IMR-90 (cell line): ENCODE measurements at regions of chr11 and their contacts with region 1.

Region 1: DNA sequence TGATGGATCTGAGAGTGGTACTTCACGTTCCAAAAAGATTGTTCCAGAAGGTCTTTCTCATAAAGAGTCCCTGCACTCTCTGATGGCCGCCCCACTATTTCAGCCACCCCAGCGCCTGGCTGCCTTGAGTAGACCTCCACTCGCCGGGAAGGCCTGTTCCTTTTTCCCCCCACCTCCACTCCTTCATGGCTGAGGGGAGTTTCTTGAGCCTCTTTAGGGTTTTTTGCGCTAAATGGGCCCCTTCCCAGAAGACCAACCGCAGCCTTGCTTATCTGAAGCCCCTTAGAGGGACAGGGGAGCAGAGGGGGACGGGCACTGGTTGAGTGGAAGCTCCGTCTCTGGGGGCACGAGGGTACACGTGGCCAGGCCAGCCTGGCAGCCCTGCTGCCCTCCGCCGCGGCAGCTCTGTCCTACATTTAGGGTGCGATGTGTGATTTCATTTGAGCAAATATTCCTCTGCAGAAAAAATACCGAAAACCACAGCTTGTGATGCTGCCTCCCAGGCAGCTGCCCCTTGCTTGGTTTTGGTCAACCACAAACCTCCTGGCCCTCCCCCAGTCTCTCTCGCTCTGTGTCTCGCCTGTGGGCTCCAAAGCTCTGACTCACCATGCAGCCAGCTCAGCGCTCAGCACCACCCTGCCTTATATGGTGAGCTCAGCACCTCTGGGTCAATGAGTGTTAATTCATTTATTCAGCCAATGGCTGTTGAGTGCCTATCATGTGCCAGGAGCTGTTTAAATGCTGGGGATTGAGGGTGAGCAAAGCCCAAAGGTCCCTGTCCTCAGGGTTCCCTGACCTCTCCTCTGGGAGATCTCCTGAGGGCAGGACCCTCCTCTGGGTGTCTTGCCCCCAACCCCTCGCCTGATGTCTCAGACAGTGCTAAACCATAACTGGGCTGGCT is 88.6 kb downstream of the TP53I11 start:
- DNase-seq: peak; percentile 99
- ATAC-seq: peak; percentile 97
- H3K4me3 ChIP-seq: no peak overlapping the region
- H3K27ac ChIP-seq: peak overlapping the region; percentile 94
- H3K4me1 ChIP-seq: peaks cover 22% of the 10 kb centered on the region
- H3K27me3 ChIP-seq: peaks cover 25% of the 10 kb centered on the region
- CTCF ChIP-seq: no peak
- POLR2A ChIP-seq: peak; percentile 52; the same call in 1 of the 2 replicates
- RAD21 ChIP-seq: no peak; the same call in 1 of the 2 replicates

Region 2: GRCh38 chr11:44766112-44766971 is 95.8 kb before region 1 on chr11:
- CTCF ChIA-PET with region 1: no interaction called
- POLR2A ChIA-PET with region 1: no interaction called
- dilution Hi-C with region 1: no loop called
- in situ Hi-C with region 1: no loop called
- intact Hi-C with region 1: loop called (anchors 2 kb)
- DNase-seq: peak; percentile 93
- ATAC-seq: peak; percentile 75
- H3K4me3 ChIP-seq: no peak overlapping the region
- H3K27ac ChIP-seq: peak overlapping the region; percentile 59
- H3K4me1 ChIP-seq: peaks cover 25% of the 10 kb centered on the region
- H3K27me3 ChIP-seq: no peaks in the 10 kb centered on the region
- CTCF ChIP-seq: peak; percentile 39
- POLR2A ChIP-seq: no peak
- RAD21 ChIP-seq: peak; percentile 33

Region 3: GRCh38 chr11:44793350-44794090 is 68.6 kb before region 1 on chr11:
- CTCF ChIA-PET with region 1: no interaction called
- POLR2A ChIA-PET with region 1: no interaction called
- dilution Hi-C with region 1: no loop called
- in situ Hi-C with region 1: no loop called
- intact Hi-C with region 1: loop called (anchors 5 kb)
- DNase-seq: peak; percentile 57
- ATAC-seq: peak; percentile 74
- H3K4me3 ChIP-seq: no peak overlapping the region
- H3K27ac ChIP-seq: no peak overlapping the region
- H3K4me1 ChIP-seq: peaks cover 5% of the 10 kb centered on the region; the same call in 1 of the 2 replicates
- H3K27me3 ChIP-seq: peaks cover 35% of the 10 kb centered on the region
- CTCF ChIP-seq: no peak
- POLR2A ChIP-seq: no peak
- RAD21 ChIP-seq: no peak

Region 4: GRCh38 chr11:44842220-44842619 is 19.9 kb before region 1 on chr11:
- CTCF ChIA-PET with region 1: interaction called, 3 read pairs
- POLR2A ChIA-PET with region 1: interaction called, 3 read pairs
- dilution Hi-C with region 1: no loop called
- in situ Hi-C with region 1: no loop called
- intact Hi-C with region 1: loop called (anchors 1 kb)
- DNase-seq: peak; percentile 96
- ATAC-seq: peak; percentile 88
- H3K4me3 ChIP-seq: no peak overlapping the region
- H3K27ac ChIP-seq: peak overlapping the region; percentile 93
- H3K4me1 ChIP-seq: peaks cover 16% of the 10 kb centered on the region
- H3K27me3 ChIP-seq: no peaks in the 10 kb centered on the region
- CTCF ChIP-seq: no peak
- POLR2A ChIP-seq: no peak
- RAD21 ChIP-seq: peak; percentile 24

Region 5: DNA sequence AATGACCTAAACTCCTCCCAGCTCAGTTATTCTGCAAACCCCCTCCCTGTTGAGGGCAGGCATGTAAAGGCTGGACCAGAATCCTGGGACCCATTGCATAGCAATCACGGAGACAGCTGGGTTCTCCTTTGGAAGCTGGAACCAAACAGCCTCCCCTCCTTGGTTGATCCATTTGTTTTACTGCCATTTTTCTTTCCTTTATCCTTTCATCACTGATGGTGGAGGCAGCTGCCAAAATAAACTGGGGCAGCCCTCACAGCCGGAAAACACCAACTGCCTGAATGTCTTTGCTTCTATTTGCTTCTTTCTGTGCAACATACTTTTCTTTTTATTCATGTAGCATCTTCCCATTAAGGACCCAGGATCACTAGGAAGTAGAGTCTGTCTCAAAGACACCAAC is 574.0 kb after region 1 on chr11:
- CTCF ChIA-PET with region 1: no interaction called
- POLR2A ChIA-PET with region 1: no interaction called
- dilution Hi-C with region 1: no loop called
- in situ Hi-C with region 1: no loop called
- intact Hi-C with region 1: no loop called
- DNase-seq: no peak
- ATAC-seq: no peak
- H3K4me3 ChIP-seq: no peak overlapping the region
- H3K27ac ChIP-seq: no peak overlapping the region
- H3K4me1 ChIP-seq: no peaks in the 10 kb centered on the region
- H3K27me3 ChIP-seq: peaks cover 9% of the 10 kb centered on the region
- CTCF ChIP-seq: no peak
- POLR2A ChIP-seq: no peak
- RAD21 ChIP-seq: no peak